GM10248 (cell line): ENCODE measurements at regions of chr13 and their contacts with region 1.

Region 1: DNA sequence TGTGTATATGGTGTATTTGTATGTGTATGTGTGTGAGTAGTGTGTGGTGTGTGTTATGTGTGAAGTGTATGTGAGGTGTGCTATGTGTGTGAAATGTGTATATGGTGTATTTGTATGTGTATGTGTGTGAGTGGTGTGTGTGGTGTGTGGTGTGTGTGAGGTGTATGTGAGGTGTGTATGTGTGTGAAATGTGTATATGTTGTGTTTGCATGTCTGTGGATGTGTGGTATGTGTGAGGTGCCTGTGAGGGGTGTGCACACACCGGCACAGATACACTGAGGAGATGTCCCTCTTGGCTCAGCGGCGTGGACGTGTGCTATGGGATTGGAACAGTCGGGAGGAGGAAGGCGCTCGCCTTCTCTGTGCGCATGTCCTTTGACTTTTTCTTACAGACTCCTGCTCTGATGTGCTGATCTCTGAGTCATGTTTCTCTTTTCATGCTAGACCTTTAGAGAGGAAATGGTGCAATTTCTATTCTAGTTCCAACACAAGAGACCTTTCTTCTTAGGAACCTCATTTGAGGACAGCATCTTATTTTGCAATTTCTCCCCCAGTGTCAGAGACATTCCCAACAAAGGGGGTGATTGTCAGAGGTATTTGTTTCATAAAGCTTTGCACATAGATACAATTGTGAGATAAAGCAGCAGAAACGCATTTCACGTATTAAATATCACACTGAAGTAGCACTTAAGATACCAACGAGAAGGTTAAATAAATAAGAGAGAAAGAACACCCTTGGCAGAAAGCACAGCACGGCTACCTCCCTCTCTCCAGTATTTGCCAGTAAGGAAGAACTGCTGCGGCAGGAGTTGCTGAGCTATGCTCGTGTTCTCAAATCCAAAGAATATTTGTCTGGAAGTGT is 11.3 kb upstream of the TNFRSF19 start:
- DNase-seq: no peak
- CTCF ChIP-seq: no peak

Region 2: DNA sequence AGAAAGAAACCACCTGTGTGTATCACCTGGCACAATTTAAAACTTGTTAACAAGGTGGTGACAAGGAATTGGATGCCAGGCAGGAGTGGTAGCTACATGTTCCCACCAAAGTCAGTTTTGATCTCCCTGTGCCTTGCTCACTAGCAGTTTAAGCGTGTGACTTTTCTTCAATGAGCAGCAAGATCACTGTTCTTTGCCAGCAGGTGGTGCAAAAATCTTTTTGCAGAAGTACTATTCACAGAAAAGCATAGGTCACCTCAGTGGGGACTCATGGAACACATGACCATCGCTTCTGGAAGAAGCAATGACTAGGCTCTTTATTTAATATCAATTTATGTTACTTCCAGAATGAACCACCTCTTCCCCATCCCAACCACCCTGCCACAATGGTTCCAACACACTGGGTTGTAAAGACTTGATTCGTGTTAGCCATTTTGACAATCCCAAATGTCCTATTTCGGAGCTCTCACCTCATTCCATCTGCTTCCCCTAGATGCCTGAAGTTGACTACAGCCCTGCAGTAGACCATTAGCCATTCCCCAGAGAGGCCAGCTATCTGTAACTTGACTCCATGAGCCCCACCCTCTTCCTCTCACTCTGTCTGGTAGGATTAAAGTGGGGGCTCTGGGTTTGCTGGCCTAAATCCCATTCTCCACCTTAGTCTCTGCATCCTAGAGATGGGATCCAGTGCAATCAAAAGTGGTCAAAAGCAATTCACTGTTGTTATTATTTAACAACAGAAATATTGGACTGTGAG is 47.7 kb before region 1 on chr13:
- CTCF ChIA-PET with region 1: interaction called, 19 read pairs
- POLR2A ChIA-PET with region 1: no interaction called
- DNase-seq: peak; percentile 58
- CTCF ChIP-seq: peak; percentile 60